ENCODE measurements at regions of chr11 and their contacts with region 1.

Region 1: DNA sequence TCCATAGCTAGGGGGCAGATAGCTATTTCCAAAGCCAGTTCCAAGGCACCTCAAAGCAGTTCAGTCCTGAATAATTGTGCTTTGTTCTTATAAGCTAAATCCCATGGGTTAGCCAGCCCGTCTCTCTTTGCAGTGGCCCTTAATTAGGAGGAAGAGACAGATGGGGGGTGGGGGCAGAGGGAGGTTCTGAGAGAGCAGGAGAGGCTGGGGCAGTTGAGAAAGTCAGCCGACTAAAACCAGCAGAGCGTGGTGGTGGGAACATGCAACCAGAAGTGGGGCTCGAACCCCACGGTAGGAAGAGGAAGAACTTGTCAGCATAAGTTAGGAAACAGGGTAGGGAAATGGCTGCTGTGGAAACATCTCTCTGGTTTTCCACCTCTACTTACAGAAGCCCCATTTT is 10.9 kb upstream of the SCN4B start:
- DNase-seq: no peak
- ATAC-seq: no peak
- H3K4me3 ChIP-seq: no peak overlapping the region
- H3K4me3 Mint-ChIP-seq: no peak overlapping the region
- H3K27ac ChIP-seq: no peak overlapping the region
- H3K27ac Mint-ChIP-seq: no peak overlapping the region
- H3K4me1 ChIP-seq: no peaks in the 10 kb centered on the region
- H3K4me1 Mint-ChIP-seq: no peaks in the 10 kb centered on the region
- H3K27me3 ChIP-seq: peaks cover 0 to 65% of the 10 kb centered on the region in 2 experiments
- H3K27me3 Mint-ChIP-seq: peaks cover 13 to 26% of the 10 kb centered on the region in 2 donors

Region 2: GRCh38 chr11:118145285-118146227 is 17.9 kb before region 1 on chr11:
- CTCF ChIA-PET with region 1: interaction called in 1 of 2 experiments, 3 read pairs
- POLR2A ChIA-PET with region 1: interaction called in 1 of 2 experiments, 11 read pairs
- DNase-seq: peak; percentile 59 to 91 (median 79)
- ATAC-seq: peak; percentile 91 to 94 (median 93)
- H3K4me3 ChIP-seq: peak overlapping the region; percentile 53 to 64
- H3K4me3 Mint-ChIP-seq: peak overlapping the region; percentile 75 to 81 (median 77)
- H3K27ac ChIP-seq: no peak overlapping the region
- H3K27ac Mint-ChIP-seq: no peak overlapping the region
- H3K4me1 ChIP-seq: peaks cover 0 to 14% of the 10 kb centered on the region in 2 experiments
- H3K4me1 Mint-ChIP-seq: peaks cover 0 to 4% (median 3%) of the 10 kb centered on the region in 3 donors
- H3K27me3 ChIP-seq: peaks cover 0 to 63% of the 10 kb centered on the region in 2 experiments
- H3K27me3 Mint-ChIP-seq: peaks cover 50 to 62% of the 10 kb centered on the region in 2 donors

Measured in T-cell (primary cell).